Dorsolateral prefrontal cortex (tissue), 120 donors: ENCODE measurements at regions of chr7 and their contacts with region 1.

Region 1: GRCh38 chr7:23462846-23463245 is 7.4 kb downstream of the IGF2BP3 start:
- DNase-seq: peak in 1 of 10 donors; percentile 21
- H3K4me3 ChIP-seq: no peak overlapping the region
- H3K27ac ChIP-seq: no peak overlapping the region
- H3K27me3 ChIP-seq: peaks cover 0 to 90% (median 64%) of the 10 kb centered on the region in 45 donors
- CTCF ChIP-seq: peak in 46 of 56 donors; percentile 9 to 71 (median 40)

Region 2: DNA sequence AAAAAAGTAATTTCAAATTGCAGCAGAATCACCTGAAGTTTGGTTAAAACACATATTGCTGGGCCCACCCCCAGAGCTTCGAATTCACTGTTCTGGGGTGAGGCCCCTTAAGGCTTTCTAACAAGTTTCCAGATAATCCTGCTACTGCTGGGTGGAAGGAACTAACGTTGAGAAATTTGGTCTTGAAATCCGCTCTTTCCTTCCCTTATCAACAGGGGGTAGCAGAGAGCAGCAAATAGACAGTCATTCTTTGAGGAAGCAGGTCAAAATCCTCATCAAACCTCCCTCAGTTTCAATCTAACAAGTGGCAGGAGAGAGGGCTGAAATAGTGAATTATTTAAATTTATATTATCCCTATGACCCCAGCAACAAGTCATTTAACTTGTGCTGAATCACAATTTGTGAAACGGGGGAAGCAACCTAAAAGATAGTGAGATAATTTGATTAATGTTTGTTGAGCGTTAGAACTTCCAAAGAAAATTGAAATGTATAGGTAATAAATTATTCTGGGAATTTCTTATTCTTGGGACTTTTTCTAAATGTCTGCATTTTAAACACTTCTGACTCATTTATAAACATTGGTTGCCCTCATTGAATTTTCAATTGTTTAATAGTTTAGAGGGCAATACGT is 185.4 kb before region 1 on chr7:
- intact Hi-C with region 1: loop called in 1 of 2 experiments (anchors 5 kb)
- DNase-seq: no peak
- H3K4me3 ChIP-seq: no peak overlapping the region
- H3K27ac ChIP-seq: no peak overlapping the region
- H3K27me3 ChIP-seq: no peaks in the 10 kb centered on the region
- CTCF ChIP-seq: peak; percentile 32 to 77 (median 66)